A673 (cell line): ENCODE measurements at regions of chr17 and their contacts with region 1.

Region 1: DNA sequence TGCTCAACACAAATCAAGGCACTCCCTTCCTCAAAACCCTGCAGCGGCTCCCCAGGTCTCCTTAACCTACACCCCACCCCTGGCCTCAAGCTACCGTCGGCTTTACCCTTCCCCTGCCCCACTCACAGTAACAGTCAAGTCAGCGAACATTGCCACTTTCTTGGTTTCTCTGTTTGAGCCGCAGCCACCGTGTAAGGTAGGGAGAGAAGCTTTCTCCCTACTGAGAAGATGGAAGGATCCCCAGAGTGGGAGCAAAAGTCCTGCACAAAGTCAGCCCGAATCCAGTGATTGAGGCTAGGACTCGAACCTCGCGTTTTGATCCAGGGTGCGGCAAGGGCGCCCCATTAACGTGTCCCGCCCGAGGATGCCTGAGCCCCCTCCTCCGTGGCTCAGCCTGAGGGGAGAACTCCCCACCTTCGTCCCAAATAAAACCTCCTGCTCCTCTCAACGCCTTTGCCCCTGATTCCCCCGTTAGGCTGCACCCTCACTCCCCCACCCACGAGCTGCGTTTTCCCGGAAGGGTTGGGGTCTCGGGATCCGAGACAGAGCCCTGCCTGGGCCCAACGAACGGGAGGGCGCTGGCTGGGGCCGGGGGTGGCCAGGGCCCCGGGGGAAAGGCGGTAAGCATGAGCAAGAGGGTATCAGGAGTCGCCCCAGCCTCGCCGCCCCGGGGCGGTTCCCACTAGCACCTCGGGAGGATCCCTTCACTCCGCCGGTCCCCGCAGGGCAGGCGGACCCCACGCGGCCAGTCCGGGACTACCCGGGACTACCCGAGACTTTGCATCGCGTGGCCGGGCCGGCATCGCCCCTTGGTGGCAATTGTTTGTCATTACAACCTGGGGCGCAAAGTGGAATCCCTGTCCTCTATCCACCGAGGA is 9.9 kb upstream of the NAGS start:
- DNase-seq: peak; percentile 66
- H3K4me3 ChIP-seq: peak overlapping the region; percentile 37
- H3K27ac ChIP-seq: no peak overlapping the region
- H3K4me1 ChIP-seq: no peaks in the 10 kb centered on the region
- H3K27me3 ChIP-seq: no peaks in the 10 kb centered on the region
- CTCF ChIP-seq: peak; percentile 69

Region 2: DNA sequence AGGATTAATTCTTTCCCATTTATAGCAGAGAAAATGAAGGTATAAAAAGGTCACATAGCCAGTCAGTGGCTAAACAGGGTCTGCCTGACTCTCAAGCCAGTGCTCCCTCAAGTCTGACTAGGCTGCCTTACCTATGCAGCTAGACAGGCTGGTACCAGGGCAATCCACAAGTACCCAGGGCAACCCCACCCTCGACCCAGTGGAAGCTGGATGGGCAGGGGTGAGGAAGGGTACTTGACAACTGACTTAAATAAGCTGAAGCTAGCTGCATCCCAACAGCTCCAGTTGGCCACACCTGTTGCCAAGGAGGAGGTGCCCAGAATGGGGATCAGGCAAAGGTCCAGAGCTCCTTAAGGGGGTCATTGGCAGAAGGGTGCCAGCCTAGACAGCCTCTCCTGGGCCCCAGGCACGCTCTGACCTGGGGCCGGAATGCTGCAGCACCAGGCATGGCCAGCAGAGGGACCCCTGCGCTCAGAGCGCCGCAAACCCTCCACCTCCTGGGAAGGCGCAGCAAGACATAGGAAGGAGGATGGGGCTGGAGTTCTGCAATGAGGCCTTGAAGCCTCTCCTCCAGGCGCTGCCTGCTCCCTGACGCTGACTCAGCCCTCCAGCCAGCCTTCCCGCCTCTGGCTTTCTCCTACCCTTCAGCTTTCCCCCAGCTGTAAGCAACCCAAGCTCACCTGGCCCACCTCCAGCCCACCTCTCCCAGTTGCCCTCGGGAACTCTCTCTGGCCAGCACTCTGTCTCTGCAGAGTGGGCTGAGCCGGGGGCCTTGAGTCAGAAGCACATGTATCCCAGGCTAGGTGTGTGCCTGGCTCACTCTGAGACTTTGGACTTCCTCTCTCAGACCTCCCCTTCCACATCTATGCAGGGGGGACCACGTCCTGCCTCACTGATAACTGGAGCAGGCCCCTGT is 116.0 kb before region 1 on chr17:
- CTCF ChIA-PET with region 1: interaction called, 5 read pairs
- POLR2A ChIA-PET with region 1: no interaction called
- intact Hi-C with region 1: loop called (anchors 2 kb)
- DNase-seq: peak; percentile 76
- H3K4me3 ChIP-seq: no peak overlapping the region
- H3K27ac ChIP-seq: no peak overlapping the region
- H3K4me1 ChIP-seq: no peaks in the 10 kb centered on the region
- H3K27me3 ChIP-seq: no peaks in the 10 kb centered on the region
- CTCF ChIP-seq: peak; percentile 79

Region 3: GRCh38 chr17:43940630-43941029 is 53.9 kb before region 1 on chr17:
- CTCF ChIA-PET with region 1: interaction called, 9 read pairs
- POLR2A ChIA-PET with region 1: no interaction called
- intact Hi-C with region 1: loop called (anchors 1 kb)
- DNase-seq: peak; percentile 37
- H3K4me3 ChIP-seq: no peak overlapping the region
- H3K27ac ChIP-seq: no peak overlapping the region
- H3K4me1 ChIP-seq: no peaks in the 10 kb centered on the region
- H3K27me3 ChIP-seq: no peaks in the 10 kb centered on the region
- CTCF ChIP-seq: peak; percentile 46

Region 4: GRCh38 chr17:44218344-44219107 is 224.0 kb after region 1 on chr17:
- CTCF ChIA-PET with region 1: no interaction called
- POLR2A ChIA-PET with region 1: no interaction called
- intact Hi-C with region 1: no loop called
- DNase-seq: peak; percentile 88
- H3K4me3 ChIP-seq: peak overlapping the region; percentile 72
- H3K27ac ChIP-seq: peak overlapping the region; percentile 93
- H3K4me1 ChIP-seq: peaks cover 9% of the 10 kb centered on the region
- H3K27me3 ChIP-seq: no peaks in the 10 kb centered on the region
- CTCF ChIP-seq: peak; percentile 50